GM10248 (cell line): ENCODE measurements at regions of chr17 and their contacts with region 1.

Region 1: DNA sequence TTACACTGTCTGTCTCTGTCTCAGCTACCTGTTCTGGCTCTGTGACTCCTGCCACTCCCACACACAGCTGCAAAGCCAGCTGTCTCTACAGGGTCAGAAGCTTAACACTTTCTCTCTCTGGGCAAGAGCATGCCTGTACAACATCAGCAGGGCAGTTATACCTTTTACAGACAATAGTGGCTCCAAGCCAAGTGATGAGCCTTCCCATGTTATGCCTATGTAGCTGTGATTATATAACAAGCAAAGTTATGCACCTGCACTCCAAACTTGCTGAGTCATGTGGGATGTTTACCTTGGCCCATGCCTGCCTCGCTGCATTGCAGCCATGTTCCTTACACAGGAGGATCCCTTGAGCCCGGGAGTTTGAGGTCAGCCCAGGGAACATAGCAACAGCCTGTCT is 31.8 kb upstream of the APPBP2 start:
- DNase-seq: no peak
- CTCF ChIP-seq: no peak

Region 2: DNA sequence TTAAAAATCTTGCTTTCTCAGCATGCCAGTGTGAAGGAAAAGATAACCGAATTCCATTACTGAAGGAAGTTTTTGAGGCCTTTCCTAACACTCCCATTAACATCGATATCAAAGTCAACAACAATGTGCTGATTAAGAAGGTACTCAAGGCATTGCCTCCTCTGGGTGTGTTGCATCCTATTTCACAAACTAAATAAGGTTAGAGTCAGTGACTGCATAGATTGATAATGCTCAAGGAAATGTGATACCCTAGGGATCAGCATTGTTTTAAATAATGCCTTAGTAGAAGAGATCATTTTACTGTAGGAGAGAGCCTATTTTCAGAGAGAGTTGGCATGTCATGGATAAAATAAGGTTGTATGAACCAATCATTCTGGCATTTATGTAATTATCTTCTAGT is 1300.7 kb before region 1 on chr17:
- CTCF ChIA-PET with region 1: no interaction called
- POLR2A ChIA-PET with region 1: interaction called, 10 read pairs
- DNase-seq: no peak
- CTCF ChIP-seq: no peak